Aorta (tissue), 5 donors: ENCODE measurements at regions of chr6 and their contacts with region 1.

Region 1: DNA sequence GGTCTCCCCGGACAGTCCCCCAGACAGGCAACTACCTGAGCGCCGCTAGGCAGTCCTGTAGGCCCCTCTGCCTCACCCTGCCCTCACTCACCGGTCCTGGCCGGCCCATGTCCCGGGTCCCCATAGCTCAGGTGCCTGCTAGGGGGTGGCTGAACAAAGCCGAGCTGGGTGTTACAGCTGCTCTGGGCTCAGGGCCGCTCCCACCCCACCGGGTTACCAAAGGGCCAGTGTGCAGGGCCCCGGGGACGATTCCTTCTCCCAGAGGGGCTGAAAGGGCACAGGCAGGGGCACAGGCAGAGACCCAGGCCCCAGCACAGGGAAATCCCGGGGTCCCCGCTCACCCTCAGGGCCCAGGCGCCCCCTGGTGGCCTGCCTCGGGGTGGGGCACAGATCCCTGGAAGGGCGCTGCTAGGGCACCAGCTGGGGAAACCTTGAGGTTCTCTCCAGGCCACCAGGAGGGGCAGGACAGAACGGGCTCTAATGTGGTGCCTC is 118.4 kb downstream of the GRM4 start:
- DNase-seq: peak in 1 of 2 donors; percentile 81
- ATAC-seq: peak; percentile 27
- H3K4me3 ChIP-seq: no peak overlapping the region
- H3K27ac ChIP-seq: no peak overlapping the region
- H3K4me1 ChIP-seq: no peaks in the 10 kb centered on the region
- H3K27me3 ChIP-seq: no peaks in the 10 kb centered on the region

Region 2: GRCh38 chr6:33771146-33772081 is 256.1 kb before region 1 on chr6:
- intact Hi-C with region 1: loop called in 1 of 2 experiments (anchors 10 kb)
- DNase-seq: peak; percentile 80 to 91
- ATAC-seq: peak; percentile 93
- H3K4me3 ChIP-seq: no peak overlapping the region
- H3K27ac ChIP-seq: peak overlapping the region; percentile 20 to 66
- H3K4me1 ChIP-seq: no peaks in the 10 kb centered on the region
- H3K27me3 ChIP-seq: no peaks in the 10 kb centered on the region

Region 3: GRCh38 chr6:33827546-33828451 is 199.7 kb before region 1 on chr6:
- intact Hi-C with region 1: no loop called
- DNase-seq: no peak
- ATAC-seq: no peak
- H3K4me3 ChIP-seq: no peak overlapping the region
- H3K27ac ChIP-seq: no peak overlapping the region
- H3K4me1 ChIP-seq: no peaks in the 10 kb centered on the region
- H3K27me3 ChIP-seq: no peaks in the 10 kb centered on the region

Region 4: GRCh38 chr6:34044945-34045595 is 17.6 kb after region 1 on chr6:
- intact Hi-C with region 1: no loop called
- DNase-seq: no peak
- ATAC-seq: no peak
- H3K4me3 ChIP-seq: no peak overlapping the region
- H3K27ac ChIP-seq: no peak overlapping the region
- H3K4me1 ChIP-seq: no peaks in the 10 kb centered on the region
- H3K27me3 ChIP-seq: no peaks in the 10 kb centered on the region

Region 5: DNA sequence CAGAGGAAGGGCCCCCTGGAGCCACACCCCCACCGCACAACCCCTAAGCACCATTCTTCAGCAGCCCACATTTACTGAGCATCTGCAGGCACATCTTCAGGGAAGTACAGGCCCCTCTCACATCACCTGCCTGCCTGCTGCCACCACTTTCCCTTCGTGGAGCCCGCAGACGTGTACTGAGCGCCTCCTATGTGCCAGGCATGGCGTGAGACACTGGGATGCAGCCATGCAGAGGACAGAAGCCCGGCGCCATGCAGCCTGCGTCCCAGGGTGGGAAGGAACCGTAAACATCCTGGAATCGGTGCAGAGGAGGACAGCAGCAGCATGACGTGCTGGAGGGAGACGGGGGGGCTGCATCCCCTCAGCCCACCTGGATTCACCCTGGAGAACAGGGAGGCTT is 40.3 kb after region 1 on chr6:
- intact Hi-C with region 1: no loop called
- DNase-seq: no peak
- ATAC-seq: no peak
- H3K4me3 ChIP-seq: no peak overlapping the region
- H3K27ac ChIP-seq: no peak overlapping the region
- H3K4me1 ChIP-seq: no peaks in the 10 kb centered on the region
- H3K27me3 ChIP-seq: no peaks in the 10 kb centered on the region